A673 (cell line): ENCODE measurements at regions of chr4 and their contacts with region 1.

Region 1: GRCh38 chr4:170476145-170476750 is 386.5 kb upstream of the AADAT start:
- DNase-seq: no peak
- H3K4me3 ChIP-seq: no peak overlapping the region
- H3K27ac ChIP-seq: no peak overlapping the region
- H3K4me1 ChIP-seq: no peaks in the 10 kb centered on the region
- H3K27me3 ChIP-seq: no peaks in the 10 kb centered on the region
- CTCF ChIP-seq: no peak

Region 2: GRCh38 chr4:170465434-170465833 is 10.8 kb before region 1 on chr4:
- CTCF ChIA-PET with region 1: no interaction called
- POLR2A ChIA-PET with region 1: no interaction called
- intact Hi-C with region 1: no loop called
- DNase-seq: no peak
- H3K4me3 ChIP-seq: no peak overlapping the region
- H3K27ac ChIP-seq: no peak overlapping the region
- H3K4me1 ChIP-seq: no peaks in the 10 kb centered on the region
- H3K27me3 ChIP-seq: no peaks in the 10 kb centered on the region
- CTCF ChIP-seq: no peak

Region 3: DNA sequence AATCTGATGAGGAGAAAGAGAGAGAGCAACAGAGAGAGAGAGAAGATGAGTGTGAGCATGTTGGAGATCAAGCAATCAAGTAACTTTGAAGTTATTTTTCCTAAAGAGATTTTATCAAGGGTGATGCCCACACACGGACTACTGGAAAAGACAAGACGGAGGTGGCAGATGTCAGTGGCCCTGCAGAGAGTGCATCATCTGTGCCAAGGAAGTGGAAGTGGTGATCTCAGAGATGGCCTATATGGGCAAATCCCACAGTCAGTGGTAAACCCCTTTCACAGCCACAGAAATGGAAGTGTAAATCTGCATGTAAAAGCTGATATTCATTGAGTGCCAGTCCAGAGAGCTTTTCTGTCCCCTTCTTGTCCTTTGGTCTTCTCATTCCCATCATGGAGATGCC is 190.7 kb after region 1 on chr4:
- CTCF ChIA-PET with region 1: no interaction called
- POLR2A ChIA-PET with region 1: no interaction called
- intact Hi-C with region 1: no loop called
- DNase-seq: no peak
- H3K4me3 ChIP-seq: no peak overlapping the region
- H3K27ac ChIP-seq: no peak overlapping the region
- H3K4me1 ChIP-seq: no peaks in the 10 kb centered on the region
- H3K27me3 ChIP-seq: no peaks in the 10 kb centered on the region
- CTCF ChIP-seq: no peak

Region 4: DNA sequence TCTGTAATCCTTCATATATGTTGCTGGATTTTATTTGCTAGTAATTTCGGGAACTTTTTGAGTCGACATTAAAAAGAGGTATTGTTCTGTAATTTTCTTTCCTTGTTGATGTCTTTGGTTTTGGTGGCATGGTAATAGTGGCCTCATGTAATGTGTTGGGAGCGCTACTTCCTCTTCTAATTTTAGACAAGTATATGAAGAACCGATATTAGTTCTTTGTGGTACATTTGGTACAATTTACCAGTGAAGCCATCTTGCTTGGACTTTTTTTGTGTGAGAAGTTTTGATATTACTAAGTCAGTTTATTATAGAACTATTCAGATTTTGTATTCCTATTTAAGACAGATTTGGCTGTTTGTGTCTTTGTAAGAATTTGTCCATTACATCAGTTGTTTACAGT is 282.7 kb after region 1 on chr4:
- CTCF ChIA-PET with region 1: no interaction called
- POLR2A ChIA-PET with region 1: interaction called, 18 read pairs
- intact Hi-C with region 1: no loop called
- DNase-seq: no peak
- H3K4me3 ChIP-seq: no peak overlapping the region
- H3K27ac ChIP-seq: no peak overlapping the region
- H3K4me1 ChIP-seq: no peaks in the 10 kb centered on the region
- H3K27me3 ChIP-seq: no peaks in the 10 kb centered on the region
- CTCF ChIP-seq: no peak

Region 5: GRCh38 chr4:171031338-171031737 is 555.1 kb after region 1 on chr4:
- CTCF ChIA-PET with region 1: no interaction called
- POLR2A ChIA-PET with region 1: no interaction called
- intact Hi-C with region 1: no loop called
- DNase-seq: no peak
- H3K4me3 ChIP-seq: no peak overlapping the region
- H3K27ac ChIP-seq: no peak overlapping the region
- H3K4me1 ChIP-seq: no peaks in the 10 kb centered on the region
- H3K27me3 ChIP-seq: no peaks in the 10 kb centered on the region
- CTCF ChIP-seq: no peak